CD14-positive monocyte (primary cell): ENCODE measurements at regions of chr6 and their contacts with region 1.

Region 1: GRCh38 chr6:51480040-51480439 is 607.4 kb downstream of the PKHD1 start:
- DNase-seq: no peak
- H3K4me3 ChIP-seq: no peak overlapping the region
- H3K4me3 Mint-ChIP-seq: no peak overlapping the region
- H3K27ac ChIP-seq: no peak overlapping the region
- H3K27ac Mint-ChIP-seq: no peak overlapping the region
- H3K4me1 ChIP-seq: no peaks in the 10 kb centered on the region
- H3K4me1 Mint-ChIP-seq: no peaks in the 10 kb centered on the region
- H3K27me3 ChIP-seq: no peaks in the 10 kb centered on the region
- H3K27me3 Mint-ChIP-seq: peaks cover 0 to 1% (median 0%) of the 10 kb centered on the region in 3 donors
- CTCF ChIP-seq: no peak

Region 2: GRCh38 chr6:51432481-51432880 is 47.6 kb before region 1 on chr6:
- intact Hi-C with region 1: loop called in 1 of 2 experiments (anchors 5 kb)
- DNase-seq: no peak
- H3K4me3 ChIP-seq: no peak overlapping the region
- H3K4me3 Mint-ChIP-seq: no peak overlapping the region
- H3K27ac ChIP-seq: no peak overlapping the region
- H3K27ac Mint-ChIP-seq: no peak overlapping the region
- H3K4me1 ChIP-seq: no peaks in the 10 kb centered on the region
- H3K4me1 Mint-ChIP-seq: no peaks in the 10 kb centered on the region
- H3K27me3 ChIP-seq: no peaks in the 10 kb centered on the region
- H3K27me3 Mint-ChIP-seq: no peaks in the 10 kb centered on the region
- CTCF ChIP-seq: no peak